ENCODE measurements at regions of chr17 and their contacts with region 1.

Region 1: DNA sequence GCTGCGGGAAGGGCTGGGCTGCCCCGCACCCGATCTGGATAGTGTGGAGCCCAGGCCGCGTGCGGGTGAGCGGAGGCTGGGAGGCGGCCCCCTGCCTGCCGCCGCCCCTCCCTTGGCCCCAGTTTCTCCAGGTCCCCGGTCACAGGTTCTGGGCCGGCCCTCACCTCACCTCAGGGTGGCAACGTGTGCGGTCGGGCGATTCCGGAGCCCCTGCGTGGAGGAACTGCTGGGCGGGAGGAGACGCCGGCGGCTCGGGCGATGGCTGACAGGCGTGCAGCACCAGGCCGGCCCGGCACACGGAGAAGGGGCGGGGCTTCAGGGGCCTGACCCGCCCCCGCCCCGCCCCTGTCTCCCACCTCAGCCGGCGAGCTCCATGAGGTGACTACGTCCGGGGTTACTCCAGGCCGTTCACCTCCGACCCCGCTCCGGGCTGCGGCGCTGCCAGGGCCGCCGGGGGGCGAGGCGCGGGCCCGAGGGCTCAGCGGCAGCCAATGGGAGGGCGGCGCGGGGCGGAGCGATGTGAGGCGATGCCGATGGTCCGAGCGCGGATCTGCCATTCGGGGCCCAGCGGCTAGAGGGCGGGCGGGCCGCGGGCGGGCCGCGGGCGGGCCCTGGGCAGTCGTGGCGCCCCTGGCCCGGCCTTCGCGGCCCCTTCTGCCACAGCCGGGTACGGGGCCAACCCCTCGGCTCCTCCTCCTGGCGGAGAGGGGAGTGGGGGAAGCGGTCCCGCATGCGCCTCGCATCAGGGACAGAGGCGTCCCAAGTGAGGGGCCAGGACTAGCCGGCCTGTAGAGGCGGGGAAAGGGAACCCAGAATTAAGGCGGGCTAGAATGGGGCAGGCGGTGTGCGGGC is 16.7 kb upstream of the C17orf78 start:
- DNase-seq: peak; percentile 95
- H3K4me3 Mint-ChIP-seq: peak overlapping the region; percentile 95
- H3K27ac Mint-ChIP-seq: peak overlapping the region; percentile 79
- H3K4me1 Mint-ChIP-seq: peaks cover 26% of the 10 kb centered on the region
- H3K27me3 Mint-ChIP-seq: no peaks in the 10 kb centered on the region

Region 2: GRCh38 chr17:37212179-37212578 is 146.9 kb before region 1 on chr17:
- CTCF ChIA-PET with region 1: no interaction called
- POLR2A ChIA-PET with region 1: no interaction called
- DNase-seq: no peak
- H3K4me3 Mint-ChIP-seq: no peak overlapping the region
- H3K27ac Mint-ChIP-seq: no peak overlapping the region
- H3K4me1 Mint-ChIP-seq: no peaks in the 10 kb centered on the region
- H3K27me3 Mint-ChIP-seq: no peaks in the 10 kb centered on the region

Region 3: DNA sequence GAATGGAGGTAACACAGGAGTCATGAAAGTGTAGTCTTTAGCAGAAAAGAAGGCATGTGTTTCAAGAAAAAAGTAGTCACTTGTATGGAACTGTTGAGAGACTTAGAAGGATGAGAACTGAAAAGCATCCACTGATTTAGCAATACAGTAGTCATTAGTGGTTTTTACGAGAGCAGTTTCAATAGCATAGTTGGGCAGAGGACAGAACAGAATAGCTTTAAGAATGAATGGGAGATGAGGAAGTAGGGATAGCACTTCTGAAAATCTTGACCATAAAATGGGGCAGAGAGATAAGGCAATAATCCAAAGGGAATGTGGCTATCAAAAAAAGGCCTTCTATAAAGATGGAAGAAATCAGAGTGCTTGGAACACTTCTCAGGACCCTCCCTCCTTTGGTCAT is 48.1 kb before region 1 on chr17:
- CTCF ChIA-PET with region 1: no interaction called
- POLR2A ChIA-PET with region 1: no interaction called
- DNase-seq: no peak
- H3K4me3 Mint-ChIP-seq: no peak overlapping the region
- H3K27ac Mint-ChIP-seq: no peak overlapping the region
- H3K4me1 Mint-ChIP-seq: no peaks in the 10 kb centered on the region
- H3K27me3 Mint-ChIP-seq: no peaks in the 10 kb centered on the region

Region 4: GRCh38 chr17:37344519-37344918 is 14.5 kb before region 1 on chr17:
- CTCF ChIA-PET with region 1: interaction called, 5 read pairs
- POLR2A ChIA-PET with region 1: interaction called, 12 read pairs
- DNase-seq: no peak
- H3K4me3 Mint-ChIP-seq: no peak overlapping the region
- H3K27ac Mint-ChIP-seq: peak overlapping the region; percentile 17
- H3K4me1 Mint-ChIP-seq: peaks cover 17% of the 10 kb centered on the region
- H3K27me3 Mint-ChIP-seq: no peaks in the 10 kb centered on the region

Region 5: GRCh38 chr17:37373530-37374159 is 14.6 kb after region 1 on chr17:
- CTCF ChIA-PET with region 1: interaction called, 12 read pairs
- POLR2A ChIA-PET with region 1: interaction called, 8 read pairs
- DNase-seq: peak; percentile 82
- H3K4me3 Mint-ChIP-seq: no peak overlapping the region
- H3K27ac Mint-ChIP-seq: no peak overlapping the region
- H3K4me1 Mint-ChIP-seq: peaks cover 7% of the 10 kb centered on the region
- H3K27me3 Mint-ChIP-seq: peaks cover 3% of the 10 kb centered on the region

Region 6: DNA sequence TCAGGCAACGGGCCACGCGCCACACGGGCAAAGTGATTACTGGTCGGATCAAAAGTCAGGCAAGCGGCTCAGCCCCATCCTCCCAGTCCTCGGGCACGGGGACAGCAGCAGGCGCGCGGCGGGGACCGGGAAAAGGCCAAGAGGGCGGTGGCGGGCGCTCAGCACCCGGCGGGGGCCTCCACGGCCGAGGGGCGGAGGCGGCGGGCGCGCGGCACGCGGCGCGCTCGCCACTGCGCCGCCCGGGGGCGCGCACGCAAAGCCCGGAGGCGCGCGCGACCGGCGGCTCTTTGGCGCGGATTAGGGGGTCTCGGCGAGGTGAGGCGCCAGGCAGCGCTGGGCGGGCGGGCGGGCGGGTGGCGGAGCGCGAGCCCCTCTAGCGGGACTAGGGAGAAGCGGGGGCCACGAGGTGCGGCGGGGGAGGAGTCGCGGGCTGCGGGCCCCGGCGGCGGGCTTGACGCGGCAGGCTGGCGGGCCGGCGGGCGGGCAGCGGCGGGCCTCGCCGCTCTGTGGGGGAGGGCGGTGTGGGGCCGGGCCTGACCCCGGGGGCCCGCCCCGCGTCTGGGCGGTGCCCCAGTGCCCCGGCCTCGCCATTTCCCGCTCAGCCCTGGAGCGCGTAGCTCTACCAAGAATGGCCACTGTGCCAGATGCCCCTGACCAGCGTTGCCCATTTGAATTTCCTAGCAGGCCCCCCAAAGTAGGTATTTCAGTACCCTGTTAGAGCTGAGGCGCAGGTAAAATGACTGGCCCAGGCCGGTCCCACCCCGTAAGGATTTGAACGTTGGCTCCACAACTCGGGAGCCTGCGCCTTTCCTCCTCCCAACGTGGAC is 47.8 kb after region 1 on chr17 and contains the starts of genes ACACA and TADA2A:
- CTCF ChIA-PET with region 1: interaction called, 3 read pairs
- POLR2A ChIA-PET with region 1: interaction called, 13 read pairs
- DNase-seq: peak; percentile 83
- H3K4me3 Mint-ChIP-seq: peak within 1 kb of the TSS; percentile 98
- H3K27ac Mint-ChIP-seq: peak within 1 kb of the TSS; percentile 93
- H3K4me1 Mint-ChIP-seq: peaks cover 72% of the 10 kb centered on the region
- H3K27me3 Mint-ChIP-seq: no peaks in the 10 kb centered on the region
- total RNA-seq, gene ACACA: 38.6 to 46.3 TPM
- total RNA-seq, gene TADA2A: 42.5 to 43.0 TPM

Region 7: GRCh38 chr17:37430051-37430627 is 71.1 kb after region 1 on chr17:
- CTCF ChIA-PET with region 1: no interaction called
- POLR2A ChIA-PET with region 1: interaction called, 10 read pairs
- DNase-seq: no peak
- H3K4me3 Mint-ChIP-seq: peak overlapping the region; percentile 41
- H3K27ac Mint-ChIP-seq: peak overlapping the region; percentile 99
- H3K4me1 Mint-ChIP-seq: peaks cover 58% of the 10 kb centered on the region
- H3K27me3 Mint-ChIP-seq: no peaks in the 10 kb centered on the region

Measured in activated CD4-positive, alpha-beta memory T cell treated with anti-CD3 and anti-CD28 coated beads, Interleukin-2, amount 10 ng/mL, durations not matched to agents 7 days and 5 days (primary cell).